ENCODE measurements at regions of chr1 and their contacts with region 1.

Region 1: DNA sequence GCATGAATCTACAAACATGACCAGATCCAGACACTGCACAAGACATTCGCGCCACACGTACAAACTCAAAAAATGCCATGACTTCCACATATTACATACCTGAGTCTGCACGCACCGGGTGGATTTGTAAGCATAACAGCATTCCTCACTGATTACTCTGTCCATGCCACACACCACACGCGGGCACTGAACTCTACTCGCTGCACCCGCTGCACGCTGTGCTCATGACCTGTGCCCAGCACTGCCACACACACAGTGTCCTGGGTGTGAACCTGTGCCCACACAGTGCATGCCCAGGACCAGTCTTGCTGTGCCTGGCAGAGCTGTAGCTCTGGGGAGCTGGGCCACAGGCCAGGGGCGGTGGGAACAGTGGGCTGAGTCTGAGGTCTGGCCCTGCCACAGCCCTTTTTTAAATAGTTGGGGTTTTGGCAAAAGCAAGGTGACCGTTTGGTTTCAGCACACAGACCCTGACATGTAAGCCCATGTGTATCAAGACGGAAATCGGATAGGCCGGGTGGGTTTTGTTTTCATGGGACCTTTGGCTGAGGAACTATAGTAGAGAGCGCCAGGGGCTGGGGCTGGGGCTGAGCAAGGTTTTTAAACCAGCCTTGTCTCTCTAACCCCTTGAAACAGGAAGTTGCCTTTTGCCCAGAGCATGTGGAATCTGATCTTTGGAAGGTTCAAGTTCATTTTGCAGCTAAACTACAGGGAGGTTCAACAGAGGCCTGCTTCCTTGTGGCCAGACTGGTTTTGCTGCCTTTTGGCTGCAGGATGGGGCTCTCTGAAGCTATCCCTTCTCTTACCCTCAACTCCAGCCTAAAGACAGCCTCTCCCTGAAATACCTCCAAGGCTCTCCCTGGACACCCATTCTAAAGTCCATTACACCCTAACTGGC is 12.3 kb upstream of the GOLT1A start:
- DNase-seq: peak; percentile 74 to 90
- H3K4me3 ChIP-seq: peak overlapping the region; percentile 27; the same call in 1 of the 2 replicates
- H3K27ac ChIP-seq: peak overlapping the region; percentile 82
- H3K4me1 ChIP-seq: peaks cover 37% of the 10 kb centered on the region
- H3K27me3 ChIP-seq: no peaks in the 10 kb centered on the region
- CTCF ChIP-seq: no peak

Region 2: DNA sequence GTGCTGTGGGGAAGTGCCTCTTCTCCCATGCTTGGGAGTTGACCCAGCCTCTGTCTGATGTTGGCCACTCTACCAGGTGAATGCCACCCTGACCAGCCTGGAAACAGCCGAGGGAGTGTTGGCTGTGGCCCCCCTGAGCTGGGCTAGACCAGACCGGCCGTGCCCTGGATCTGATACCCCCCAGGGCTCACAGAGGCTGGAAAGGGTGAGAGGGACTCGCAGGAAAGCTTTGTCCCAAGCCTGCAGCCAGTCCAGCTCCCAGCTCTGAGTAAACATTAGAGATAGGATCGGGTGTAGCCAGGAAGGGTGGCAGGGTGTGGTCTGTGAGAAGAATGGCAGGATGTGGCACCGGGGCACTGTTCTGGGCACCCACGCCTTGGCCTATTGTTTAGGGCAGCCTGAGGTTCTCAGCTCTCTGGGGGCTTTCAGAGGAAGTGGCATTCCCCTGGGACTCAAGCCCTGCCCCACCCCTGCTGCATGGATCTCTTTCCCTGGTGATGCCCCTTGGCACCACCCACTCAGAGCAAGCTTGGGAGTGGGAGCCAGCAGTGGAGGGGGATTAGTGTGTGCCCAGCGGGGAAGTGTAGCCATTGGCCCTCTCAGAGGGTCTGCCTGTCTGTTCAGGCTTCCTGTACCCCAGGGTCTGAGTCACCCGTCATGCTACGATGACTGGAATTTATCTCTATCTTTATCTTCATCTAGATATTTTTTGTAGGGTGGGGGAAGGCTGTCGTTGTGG is 121.8 kb before region 1 on chr1:
- CTCF ChIA-PET with region 1: no interaction called
- POLR2A ChIA-PET with region 1: no interaction called
- intact Hi-C with region 1: no loop called
- DNase-seq: peak; percentile 88 to 92
- H3K4me3 ChIP-seq: peak overlapping the region; percentile 38
- H3K27ac ChIP-seq: peak overlapping the region; percentile 96
- H3K4me1 ChIP-seq: peaks cover 84% of the 10 kb centered on the region
- H3K27me3 ChIP-seq: no peaks in the 10 kb centered on the region
- CTCF ChIP-seq: no peak

Region 3: DNA sequence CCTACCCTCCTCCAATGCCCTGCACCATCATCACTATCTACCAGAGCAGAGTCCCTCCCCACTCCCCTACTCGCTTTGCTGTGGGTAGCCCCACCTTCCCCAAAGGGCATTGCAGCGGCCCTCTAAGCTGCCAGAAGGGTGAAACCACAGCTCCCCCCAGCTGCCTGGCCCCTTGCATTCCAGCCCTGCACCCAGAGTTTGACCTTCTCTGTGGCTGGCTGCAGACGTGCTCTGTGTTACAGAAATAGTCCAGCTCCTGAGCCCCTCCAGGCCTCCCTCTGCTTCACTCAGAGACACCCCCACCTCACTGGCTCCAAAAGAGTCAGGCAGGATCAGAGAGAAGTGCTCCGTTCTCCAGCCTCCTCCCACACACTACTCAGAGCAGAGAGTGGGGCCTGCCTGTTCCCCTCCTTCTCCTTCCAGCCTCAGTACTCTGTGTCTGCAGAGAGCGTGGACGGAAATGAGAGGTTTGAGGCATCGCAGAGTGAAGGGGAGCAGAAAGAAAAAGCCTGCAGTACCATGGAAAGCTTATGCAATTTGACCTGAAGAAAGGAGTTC is 70.4 kb after region 1 on chr1:
- CTCF ChIA-PET with region 1: no interaction called
- POLR2A ChIA-PET with region 1: no interaction called
- intact Hi-C with region 1: loop called (anchors 2 kb)
- DNase-seq: peak; percentile 75 to 84
- H3K4me3 ChIP-seq: no peak overlapping the region
- H3K27ac ChIP-seq: peak overlapping the region; percentile 84
- H3K4me1 ChIP-seq: peaks cover 66% of the 10 kb centered on the region
- H3K27me3 ChIP-seq: no peaks in the 10 kb centered on the region
- CTCF ChIP-seq: no peak